Activated CD4-positive, alpha-beta memory T cell treated with anti-CD3 and anti-CD28 coated beads for 36 hours (primary cell): ENCODE measurements at regions of chr1 and their contacts with region 1.

Region 1: GRCh38 chr1:1122078-1122811 is 6.4 kb upstream of the C1orf159 start:
- DNase-seq: peak; percentile 89
- H3K4me3 Mint-ChIP-seq: no peak overlapping the region
- H3K27ac Mint-ChIP-seq: no peak overlapping the region
- H3K4me1 Mint-ChIP-seq: peaks cover 6% of the 10 kb centered on the region
- H3K27me3 Mint-ChIP-seq: peaks cover 7% of the 10 kb centered on the region

Region 2: DNA sequence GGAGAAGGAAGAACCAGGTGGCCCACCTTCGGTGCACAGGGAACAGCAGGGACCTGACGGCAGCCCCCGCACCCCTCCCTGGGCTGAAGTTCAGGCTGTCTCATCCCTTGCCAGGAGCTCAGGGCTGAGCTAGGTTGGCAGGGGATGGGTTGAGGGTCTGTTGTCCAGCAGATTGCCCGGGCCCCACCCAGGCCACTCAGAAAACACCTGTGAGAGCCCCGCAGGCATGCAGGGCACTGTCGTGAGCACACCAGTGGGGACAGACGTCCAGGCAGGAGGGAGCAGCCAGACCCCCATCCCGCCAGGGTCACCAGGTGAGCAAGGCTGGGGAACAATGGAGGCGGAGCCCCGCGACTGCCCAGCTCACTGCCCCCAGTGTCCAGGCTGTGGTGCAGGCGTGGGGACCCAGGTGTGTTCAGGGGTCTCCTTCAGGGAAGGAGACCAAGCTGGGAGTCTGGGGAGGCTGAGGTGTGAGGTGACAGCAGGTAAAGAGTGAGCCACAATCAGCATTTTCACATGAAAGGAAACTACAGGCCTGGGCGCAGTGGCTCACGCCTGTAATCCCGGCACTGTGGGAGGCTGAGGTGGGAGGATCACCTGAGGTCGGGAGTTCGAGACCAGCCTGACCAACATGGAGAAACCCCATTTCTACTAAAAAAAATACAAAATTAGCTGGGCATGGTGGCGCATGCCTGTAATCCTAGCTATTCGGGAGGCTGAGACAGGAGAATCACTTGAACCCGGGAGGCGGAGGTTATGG is 207.9 kb before region 1 on chr1:
- CTCF ChIA-PET with region 1: no interaction called
- POLR2A ChIA-PET with region 1: no interaction called
- intact Hi-C with region 1: no loop called
- DNase-seq: no peak
- H3K4me3 Mint-ChIP-seq: no peak overlapping the region
- H3K27ac Mint-ChIP-seq: no peak overlapping the region
- H3K4me1 Mint-ChIP-seq: no peaks in the 10 kb centered on the region
- H3K27me3 Mint-ChIP-seq: peaks cover 35% of the 10 kb centered on the region

Region 3: GRCh38 chr1:1157426-1157913 is 35.2 kb after region 1 on chr1:
- CTCF ChIA-PET with region 1: interaction called, 10 read pairs
- POLR2A ChIA-PET with region 1: no interaction called
- intact Hi-C with region 1: no loop called
- DNase-seq: peak; percentile 82
- H3K4me3 Mint-ChIP-seq: peak overlapping the region; percentile 73
- H3K27ac Mint-ChIP-seq: peak overlapping the region; percentile 62
- H3K4me1 Mint-ChIP-seq: no peaks in the 10 kb centered on the region
- H3K27me3 Mint-ChIP-seq: no peaks in the 10 kb centered on the region

Region 4: DNA sequence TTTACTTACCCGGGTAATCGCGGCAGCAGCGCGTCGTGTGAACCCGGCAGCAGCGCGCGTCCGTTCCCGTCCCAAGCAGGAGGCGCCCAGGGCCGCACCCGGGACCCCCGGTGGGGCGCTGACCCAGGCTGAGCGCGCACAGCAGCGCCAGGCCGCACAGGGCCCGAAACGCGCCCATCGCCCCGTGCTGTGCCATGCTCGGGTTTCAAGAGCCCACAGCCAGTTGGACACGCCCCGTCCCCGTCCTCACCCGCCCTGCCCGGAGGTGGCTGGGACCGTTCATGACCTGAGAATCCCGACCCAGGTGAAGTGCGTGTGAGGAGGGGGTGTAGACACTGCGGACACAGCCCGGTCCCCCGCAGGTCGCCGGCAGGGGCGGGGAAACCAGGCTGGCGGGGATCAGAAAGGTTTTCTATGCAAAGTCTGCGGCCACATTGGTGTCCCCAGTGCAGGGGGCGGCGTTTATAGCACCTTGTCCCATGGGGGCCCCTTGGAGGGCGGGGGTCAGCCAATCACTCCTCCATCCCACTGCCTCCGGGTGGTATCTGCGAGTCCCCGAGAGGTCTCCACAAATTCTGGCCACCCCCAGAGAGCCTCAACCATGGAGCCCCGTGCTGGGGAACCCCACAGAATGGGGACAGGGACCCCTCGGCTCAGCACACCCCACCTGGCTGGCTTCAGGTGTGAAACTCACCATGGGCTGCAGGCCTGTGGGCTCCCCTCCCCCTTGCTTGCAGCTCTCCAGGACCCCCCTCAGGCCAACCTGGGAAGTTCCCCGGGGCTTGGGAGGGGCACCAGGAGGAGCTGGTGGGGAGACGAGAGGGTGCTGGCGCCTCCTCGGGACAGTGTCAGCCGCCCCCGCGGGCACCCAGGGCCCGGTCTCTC is 84.4 kb after region 1 on chr1 and contains the start of gene TNFRSF18:
- CTCF ChIA-PET with region 1: interaction called, 13 read pairs
- POLR2A ChIA-PET with region 1: interaction called, 4 read pairs
- intact Hi-C with region 1: loop called (anchors 2 kb)
- DNase-seq: peak; percentile 76
- H3K4me3 Mint-ChIP-seq: peak within 1 kb of the TSS; percentile 84
- H3K27ac Mint-ChIP-seq: peak within 1 kb of the TSS; percentile 100
- H3K4me1 Mint-ChIP-seq: peaks cover 31% of the 10 kb centered on the region
- H3K27me3 Mint-ChIP-seq: no peaks in the 10 kb centered on the region
- total RNA-seq, gene TNFRSF18: 375 to 387 TPM

Region 5: GRCh38 chr1:1231400-1232223 is 109.4 kb after region 1 on chr1 and contains the start of gene SDF4:
- CTCF ChIA-PET with region 1: interaction called, 34 read pairs
- POLR2A ChIA-PET with region 1: interaction called, 3 read pairs
- intact Hi-C with region 1: no loop called
- DNase-seq: peak; percentile 98
- H3K4me3 Mint-ChIP-seq: peak within 1 kb of the TSS; percentile 94
- H3K27ac Mint-ChIP-seq: peak within 1 kb of the TSS; percentile 92
- H3K4me1 Mint-ChIP-seq: peaks cover 33% of the 10 kb centered on the region
- H3K27me3 Mint-ChIP-seq: no peaks in the 10 kb centered on the region
- total RNA-seq, gene SDF4: 302 to 305 TPM

Region 6: GRCh38 chr1:1291548-1292441 is 169.6 kb after region 1 on chr1:
- CTCF ChIA-PET with region 1: interaction called, 74 read pairs
- POLR2A ChIA-PET with region 1: no interaction called
- intact Hi-C with region 1: loop called (anchors 2 kb)
- DNase-seq: peak; percentile 75
- H3K4me3 Mint-ChIP-seq: no peak overlapping the region
- H3K27ac Mint-ChIP-seq: no peak overlapping the region
- H3K4me1 Mint-ChIP-seq: peaks cover 4% of the 10 kb centered on the region
- H3K27me3 Mint-ChIP-seq: no peaks in the 10 kb centered on the region

Region 7: DNA sequence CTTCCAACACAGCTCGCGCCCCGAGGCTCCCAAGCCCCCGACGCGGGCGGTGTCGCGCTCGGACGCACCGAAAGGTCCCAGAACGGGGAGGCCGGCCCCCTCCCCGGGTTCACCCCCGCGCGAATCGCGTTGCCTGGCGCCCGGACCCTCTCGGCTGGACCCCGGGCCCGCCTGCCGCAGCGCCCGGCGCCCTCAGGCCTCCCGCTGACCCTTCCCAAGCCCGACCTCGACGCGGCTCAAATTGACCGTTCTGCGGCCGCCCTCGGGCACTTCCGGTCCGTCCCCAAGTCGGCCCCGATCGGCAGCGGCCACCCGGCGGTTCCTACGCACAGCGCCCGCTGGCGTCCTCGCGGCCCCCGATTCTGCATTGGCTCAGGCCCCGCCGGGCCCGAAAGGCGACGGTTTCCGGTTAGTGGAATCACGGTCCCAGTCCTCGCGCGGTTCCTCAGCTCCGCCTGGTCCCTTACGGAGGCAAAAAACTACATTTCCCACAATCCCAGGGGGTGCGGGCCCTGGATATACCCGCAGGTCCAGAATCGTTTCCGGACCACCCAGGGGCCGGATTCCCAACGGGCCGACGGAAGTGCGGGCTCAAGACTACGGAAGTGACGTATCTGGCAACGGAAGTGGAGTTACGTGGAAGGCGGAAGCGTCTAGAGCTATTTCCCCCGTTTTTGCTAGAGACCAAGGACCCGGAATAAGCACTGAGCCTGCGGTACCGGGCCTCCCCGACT is 252.9 kb after region 1 on chr1 and contains the start of gene AURKAIP1:
- CTCF ChIA-PET with region 1: interaction called, 13 read pairs
- POLR2A ChIA-PET with region 1: no interaction called
- intact Hi-C with region 1: no loop called
- DNase-seq: peak; percentile 98
- H3K4me3 Mint-ChIP-seq: peak within 1 kb of the TSS; percentile 87
- H3K27ac Mint-ChIP-seq: peak within 1 kb of the TSS; percentile 90
- H3K4me1 Mint-ChIP-seq: peaks cover 18% of the 10 kb centered on the region
- H3K27me3 Mint-ChIP-seq: no peaks in the 10 kb centered on the region
- total RNA-seq, gene AURKAIP1: 124 to 131 TPM